Transverse colon (tissue), 4 donors: ENCODE measurements at regions of chr15 and their contacts with region 1.

Region 1: DNA sequence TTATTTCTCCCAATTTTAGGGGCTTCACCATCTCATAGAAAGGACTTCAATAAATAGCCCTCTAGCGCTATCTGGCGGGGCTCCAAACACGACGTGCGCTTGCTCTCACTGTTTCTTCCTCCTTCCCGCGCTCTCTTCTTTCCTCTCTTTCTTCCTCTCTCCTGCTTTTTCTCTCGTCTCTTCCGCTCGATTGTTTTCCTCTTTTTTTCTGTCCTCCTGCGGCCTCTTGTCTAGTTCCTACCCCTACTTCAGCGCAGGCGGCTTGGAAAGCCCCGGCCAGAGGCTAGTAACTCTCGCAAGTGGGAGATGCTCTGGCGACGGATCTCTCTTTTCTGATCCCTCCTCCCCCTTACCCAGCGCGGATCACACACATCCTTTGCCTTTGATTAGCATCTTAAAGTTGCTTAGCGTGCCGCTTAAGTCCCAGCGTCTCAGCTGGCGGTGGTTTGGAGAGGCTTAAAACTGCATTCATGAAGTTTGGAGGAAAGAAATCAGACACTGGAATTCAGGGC is 6.2 kb upstream of the MEIS2 start:
- DNase-seq: no peak
- H3K4me3 ChIP-seq: peak overlapping the region in 3 of 4 donors; percentile 6 to 35 (median 16)
- H3K27ac ChIP-seq: peak overlapping the region; percentile 82 to 98 (median 90)
- H3K4me1 ChIP-seq: peaks cover 0 to 23% (median 3%) of the 10 kb centered on the region in 4 donors
- H3K27me3 ChIP-seq: peaks cover 100% of the 10 kb centered on the region
- CTCF ChIP-seq: peak in 1 of 5 experiments; percentile 22
- EP300 ChIP-seq: no peak
- POLR2A ChIP-seq: no peak

Region 2: DNA sequence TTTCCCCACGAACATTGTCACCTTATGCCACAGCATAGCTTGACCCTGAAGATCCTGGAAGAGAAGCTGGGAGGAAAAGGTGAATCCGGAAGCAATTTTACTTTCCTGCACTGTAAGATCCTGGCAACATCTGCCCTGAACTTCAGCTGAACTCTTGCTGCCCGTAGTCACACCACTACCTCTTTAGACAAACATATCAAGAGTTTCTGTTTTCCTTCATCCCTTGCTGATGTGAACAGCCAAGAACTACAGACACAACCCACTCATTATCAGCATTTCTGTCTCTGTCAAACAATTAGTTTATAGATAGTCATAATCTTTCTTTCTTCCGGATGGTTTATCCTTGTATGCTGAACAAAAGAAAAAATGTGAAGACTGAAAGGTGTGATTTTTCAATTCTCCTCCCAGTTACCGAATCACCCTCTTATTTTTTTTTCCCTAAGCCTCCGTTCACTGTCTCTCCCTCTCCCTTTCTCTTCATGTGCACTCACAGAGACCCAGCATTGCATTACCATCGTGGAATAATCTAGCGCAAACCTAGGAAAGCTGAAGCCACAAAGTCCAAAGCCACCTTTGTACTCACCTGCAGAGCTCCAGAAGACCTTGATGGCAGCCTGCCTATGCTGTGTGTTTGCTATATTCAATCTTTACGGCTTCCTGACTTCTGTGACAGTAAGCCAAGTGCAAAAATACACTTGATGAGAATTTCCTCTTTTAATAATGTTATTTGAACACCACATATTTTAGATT is 298.0 kb before region 1 on chr15:
- in situ Hi-C with region 1: no loop called
- intact Hi-C with region 1: loop called (anchors 5 kb)
- DNase-seq: no peak
- H3K4me3 ChIP-seq: no peak overlapping the region
- H3K27ac ChIP-seq: peak overlapping the region; percentile 17 to 70 (median 45)
- H3K4me1 ChIP-seq: peaks cover 0 to 32% (median 0%) of the 10 kb centered on the region in 4 donors
- H3K27me3 ChIP-seq: no peaks in the 10 kb centered on the region
- CTCF ChIP-seq: no peak
- EP300 ChIP-seq: no peak
- POLR2A ChIP-seq: no peak

Region 3: GRCh38 chr15:36844534-36844998 is 262.0 kb before region 1 on chr15:
- in situ Hi-C with region 1: no loop called
- intact Hi-C with region 1: no loop called
- DNase-seq: no peak
- H3K4me3 ChIP-seq: no peak overlapping the region
- H3K27ac ChIP-seq: no peak overlapping the region
- H3K4me1 ChIP-seq: no peaks in the 10 kb centered on the region
- H3K27me3 ChIP-seq: no peaks in the 10 kb centered on the region
- CTCF ChIP-seq: no peak
- EP300 ChIP-seq: no peak
- POLR2A ChIP-seq: no peak

Region 4: DNA sequence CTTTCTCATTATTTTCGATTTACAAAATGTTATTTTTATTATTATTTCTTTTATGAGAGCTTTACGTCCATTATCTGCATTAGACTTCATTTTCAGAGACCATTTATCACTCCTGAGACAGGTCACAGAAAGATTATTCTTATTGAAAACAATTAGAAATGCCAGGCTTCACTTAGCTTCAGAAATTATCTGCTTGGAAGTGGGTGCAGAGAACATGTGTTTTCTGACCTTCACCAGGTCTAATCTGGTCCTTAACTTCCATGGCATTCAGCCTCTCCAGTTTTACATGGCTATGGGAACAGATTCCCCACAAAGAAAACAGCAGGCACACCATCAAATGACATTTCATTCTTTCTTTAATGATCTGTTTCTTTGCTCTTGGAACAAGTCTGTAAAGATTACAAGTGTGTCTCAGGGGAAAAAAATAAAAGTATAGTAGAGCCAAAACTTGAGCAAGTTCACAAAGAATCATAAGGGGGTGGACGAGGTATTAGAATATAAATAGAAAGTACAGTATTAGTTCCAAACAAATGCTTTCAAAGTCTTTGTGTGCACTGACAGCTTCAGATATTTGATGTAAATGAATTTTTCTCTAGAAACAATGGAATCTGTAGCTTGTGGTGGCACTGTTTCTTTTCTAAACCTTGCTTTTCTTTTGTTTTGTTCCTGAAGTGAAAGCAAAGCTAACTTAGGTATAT is 288.0 kb after region 1 on chr15:
- in situ Hi-C with region 1: no loop called
- intact Hi-C with region 1: no loop called
- DNase-seq: no peak
- H3K4me3 ChIP-seq: no peak overlapping the region
- H3K27ac ChIP-seq: no peak overlapping the region
- H3K4me1 ChIP-seq: no peaks in the 10 kb centered on the region
- H3K27me3 ChIP-seq: no peaks in the 10 kb centered on the region
- CTCF ChIP-seq: no peak
- EP300 ChIP-seq: no peak
- POLR2A ChIP-seq: no peak